Naive thymus-derived CD4-positive, alpha-beta T cell (primary cell): ENCODE measurements at regions of chr1 and their contacts with region 1.

Region 1: DNA sequence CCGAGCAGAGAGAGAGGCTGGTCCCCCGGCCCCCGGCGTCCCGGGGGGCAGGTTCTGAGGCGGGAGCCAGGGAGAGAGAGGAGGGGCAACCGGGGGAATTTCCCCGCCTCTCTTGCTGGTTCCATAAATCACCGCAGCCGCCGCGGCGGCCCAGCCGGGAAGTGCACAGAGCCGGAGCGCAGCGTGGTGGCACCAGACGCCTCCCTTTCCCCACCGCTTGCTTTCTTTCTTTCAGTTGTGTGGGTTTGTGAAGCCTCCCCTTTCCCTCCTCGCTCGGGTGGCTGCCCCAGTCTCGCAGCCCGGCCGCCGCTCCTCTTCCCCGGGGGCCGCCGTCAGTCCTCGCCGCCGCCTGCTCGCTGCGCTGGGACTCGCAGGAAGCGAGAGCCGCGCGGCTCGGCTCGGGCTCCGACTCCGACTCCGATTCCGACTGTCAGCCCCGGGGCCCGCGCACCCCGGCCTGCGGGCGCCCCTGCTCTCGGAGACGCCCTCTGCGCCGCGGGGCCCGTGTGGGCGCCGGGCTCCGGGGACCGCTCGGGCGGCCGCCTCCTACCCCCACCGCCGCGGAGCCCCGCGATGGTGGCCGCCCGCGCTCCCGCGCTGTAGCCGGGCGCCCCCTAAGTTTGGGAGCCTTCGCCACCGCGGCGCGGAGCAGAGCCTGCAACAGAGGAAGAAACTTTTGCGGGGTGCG is at the start of gene CACHD1:
- DNase-seq: peak; percentile 50 to 85 (median 68)
- ATAC-seq: peak; percentile 89
- H3K4me3 ChIP-seq: peak within 1 kb of the TSS; percentile 54
- H3K4me3 Mint-ChIP-seq: peak within 1 kb of the TSS; percentile 84 to 99 (median 94)
- H3K27ac ChIP-seq: peak within 1 kb of the TSS; percentile 59
- H3K27ac Mint-ChIP-seq: peak within 1 kb of the TSS in 8 of 9 donors; percentile 26 to 73 (median 68)
- H3K4me1 ChIP-seq: peaks cover 0 to 12% of the 10 kb centered on the region in 2 donors
- H3K4me1 Mint-ChIP-seq: peaks cover 13 to 50% (median 24%) of the 10 kb centered on the region in 7 donors
- H3K27me3 ChIP-seq: no peaks in the 10 kb centered on the region
- H3K27me3 Mint-ChIP-seq: peaks cover 28 to 67% (median 42%) of the 10 kb centered on the region in 5 donors
- total RNA-seq, gene CACHD1: 0.15 to 9.0 (median 3.4) TPM

Region 2: DNA sequence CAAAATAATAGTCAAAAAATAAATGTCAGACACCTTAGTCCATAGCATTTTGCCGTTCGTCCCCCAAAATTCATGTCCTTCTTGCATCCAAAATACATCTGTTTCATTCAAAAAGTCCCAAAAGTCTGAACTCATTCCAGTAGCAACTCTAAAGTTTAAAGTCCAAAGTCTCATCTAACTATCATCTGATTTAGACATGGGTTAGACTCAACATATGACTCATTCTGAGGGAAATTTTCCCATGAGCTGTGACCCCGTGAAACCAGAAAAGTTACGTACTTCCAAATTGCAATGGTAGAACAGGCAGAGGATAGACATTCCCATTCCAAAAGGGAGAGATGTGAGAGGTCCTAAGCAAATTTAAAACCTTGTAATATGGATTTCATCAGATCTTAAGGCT is 48.7 kb before region 1 on chr1:
- CTCF ChIA-PET with region 1: no interaction called
- POLR2A ChIA-PET with region 1: no interaction called
- intact Hi-C with region 1: no loop called
- DNase-seq: no peak
- ATAC-seq: no peak
- H3K4me3 ChIP-seq: no peak overlapping the region
- H3K4me3 Mint-ChIP-seq: no peak overlapping the region
- H3K27ac ChIP-seq: no peak overlapping the region
- H3K27ac Mint-ChIP-seq: no peak overlapping the region
- H3K4me1 ChIP-seq: no peaks in the 10 kb centered on the region
- H3K4me1 Mint-ChIP-seq: no peaks in the 10 kb centered on the region
- H3K27me3 ChIP-seq: no peaks in the 10 kb centered on the region
- H3K27me3 Mint-ChIP-seq: peaks cover 0 to 9% (median 0%) of the 10 kb centered on the region in 5 donors

Region 3: GRCh38 chr1:64505232-64505943 is 35.3 kb after region 1 on chr1:
- CTCF ChIA-PET with region 1: interaction called, 5 read pairs
- POLR2A ChIA-PET with region 1: no interaction called
- intact Hi-C with region 1: loop called in 1 of 2 experiments (anchors 2 kb)
- DNase-seq: peak; percentile 18 to 65 (median 44)
- ATAC-seq: peak; percentile 83
- H3K4me3 ChIP-seq: peak overlapping the region; percentile 43
- H3K4me3 Mint-ChIP-seq: peak overlapping the region; percentile 69 to 93 (median 90)
- H3K27ac ChIP-seq: peak overlapping the region; percentile 62
- H3K27ac Mint-ChIP-seq: peak overlapping the region in 8 of 9 donors; percentile 57 to 92 (median 85)
- H3K4me1 ChIP-seq: peaks cover 0 to 7% of the 10 kb centered on the region in 2 donors
- H3K4me1 Mint-ChIP-seq: peaks cover 4 to 88% (median 42%) of the 10 kb centered on the region in 7 donors
- H3K27me3 ChIP-seq: no peaks in the 10 kb centered on the region
- H3K27me3 Mint-ChIP-seq: peaks cover 0 to 32% (median 3%) of the 10 kb centered on the region in 5 donors

Region 4: DNA sequence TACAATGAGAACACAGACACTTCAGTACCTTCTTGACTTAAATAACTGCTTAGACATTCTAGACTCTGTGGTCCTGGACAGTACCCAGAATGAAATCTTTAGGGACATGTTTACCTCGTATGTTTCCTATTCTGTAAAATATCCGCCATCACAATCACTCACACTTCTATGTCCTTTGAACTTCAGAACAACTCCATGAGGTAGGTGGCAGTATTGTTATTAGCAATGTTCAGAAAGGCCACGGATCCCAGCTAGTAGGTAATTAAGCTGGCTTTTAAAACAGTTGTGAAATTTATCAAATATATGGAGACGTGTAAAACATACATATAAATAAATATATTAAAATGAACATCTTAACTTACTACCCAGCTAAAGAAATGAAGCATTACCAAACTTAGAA is 83.2 kb after region 1 on chr1:
- CTCF ChIA-PET with region 1: interaction called, 3 read pairs
- POLR2A ChIA-PET with region 1: interaction called, 3 read pairs
- intact Hi-C with region 1: loop called in 1 of 2 experiments (anchors 1 kb)
- DNase-seq: peak in 2 of 9 donors; percentile 12 to 16
- ATAC-seq: no peak
- H3K4me3 ChIP-seq: no peak overlapping the region
- H3K4me3 Mint-ChIP-seq: peak overlapping the region in 3 of 10 donors; percentile 6 to 18 (median 18)
- H3K27ac ChIP-seq: no peak overlapping the region
- H3K27ac Mint-ChIP-seq: peak overlapping the region in 7 of 9 donors; percentile 4 to 91 (median 70)
- H3K4me1 ChIP-seq: peaks cover 0 to 25% of the 10 kb centered on the region in 2 donors
- H3K4me1 Mint-ChIP-seq: peaks cover 20 to 81% (median 57%) of the 10 kb centered on the region in 7 donors
- H3K27me3 ChIP-seq: no peaks in the 10 kb centered on the region
- H3K27me3 Mint-ChIP-seq: peaks cover 0 to 57% (median 0%) of the 10 kb centered on the region in 5 donors

Region 5: GRCh38 chr1:64654519-64655341 is 184.6 kb after region 1 on chr1:
- CTCF ChIA-PET with region 1: no interaction called
- POLR2A ChIA-PET with region 1: no interaction called
- intact Hi-C with region 1: loop called in 1 of 2 experiments (anchors 5 kb)
- DNase-seq: no peak
- ATAC-seq: no peak
- H3K4me3 ChIP-seq: no peak overlapping the region
- H3K4me3 Mint-ChIP-seq: no peak overlapping the region
- H3K27ac ChIP-seq: no peak overlapping the region
- H3K27ac Mint-ChIP-seq: no peak overlapping the region
- H3K4me1 ChIP-seq: no peaks in the 10 kb centered on the region
- H3K4me1 Mint-ChIP-seq: no peaks in the 10 kb centered on the region
- H3K27me3 ChIP-seq: no peaks in the 10 kb centered on the region
- H3K27me3 Mint-ChIP-seq: peaks cover 0 to 5% (median 0%) of the 10 kb centered on the region in 5 donors

Region 6: GRCh38 chr1:64744492-64745180 is 274.5 kb after region 1 on chr1 and contains the start of gene RAVER2:
- CTCF ChIA-PET with region 1: no interaction called
- POLR2A ChIA-PET with region 1: no interaction called
- intact Hi-C with region 1: loop called in 1 of 2 experiments (anchors 1 kb)
- DNase-seq: peak; percentile 41 to 60 (median 48)
- ATAC-seq: peak; percentile 84
- H3K4me3 ChIP-seq: peak within 1 kb of the TSS; percentile 55
- H3K4me3 Mint-ChIP-seq: peak within 1 kb of the TSS; percentile 80 to 98 (median 90)
- H3K27ac ChIP-seq: peak within 1 kb of the TSS; percentile 10
- H3K27ac Mint-ChIP-seq: peak within 1 kb of the TSS in 8 of 9 donors; percentile 28 to 93 (median 82)
- H3K4me1 ChIP-seq: peaks cover 5% of the 10 kb centered on the region in 2 donors
- H3K4me1 Mint-ChIP-seq: peaks cover 11 to 26% (median 16%) of the 10 kb centered on the region in 7 donors
- H3K27me3 ChIP-seq: no peaks in the 10 kb centered on the region
- H3K27me3 Mint-ChIP-seq: peaks cover 0 to 51% (median 6%) of the 10 kb centered on the region in 5 donors
- total RNA-seq, gene RAVER2: 0.29 to 1.9 (median 1.2) TPM